Esophagus muscularis mucosa (tissue), 4 donors: ENCODE measurements at regions of chr4 and their contacts with region 1.

Region 1: DNA sequence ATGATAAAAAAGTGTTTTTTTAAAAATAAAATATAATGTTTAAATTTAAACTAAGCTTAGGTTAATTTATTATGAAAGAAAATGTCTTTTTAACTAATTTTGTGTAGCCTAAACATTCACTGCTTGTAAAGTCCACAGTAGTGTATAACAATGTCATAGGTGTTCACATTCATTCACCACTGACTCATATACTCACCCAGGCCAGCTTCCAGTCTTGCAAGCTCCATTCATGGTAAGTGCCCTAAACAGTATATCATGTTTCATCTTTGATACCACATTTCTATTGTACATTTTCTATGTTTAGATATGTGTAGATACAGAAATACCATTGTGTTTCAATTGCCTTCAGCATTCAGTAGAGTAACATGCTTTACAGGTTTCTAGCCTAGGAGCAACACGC is 530.3 kb downstream of the EPHA5 start:
- DNase-seq: no peak
- H3K4me3 ChIP-seq: no peak overlapping the region
- H3K27ac ChIP-seq: no peak overlapping the region
- H3K4me1 ChIP-seq: no peaks in the 10 kb centered on the region
- H3K27me3 ChIP-seq: no peaks in the 10 kb centered on the region
- CTCF ChIP-seq: no peak
- EP300 ChIP-seq: no peak
- POLR2A ChIP-seq: no peak

Region 2: DNA sequence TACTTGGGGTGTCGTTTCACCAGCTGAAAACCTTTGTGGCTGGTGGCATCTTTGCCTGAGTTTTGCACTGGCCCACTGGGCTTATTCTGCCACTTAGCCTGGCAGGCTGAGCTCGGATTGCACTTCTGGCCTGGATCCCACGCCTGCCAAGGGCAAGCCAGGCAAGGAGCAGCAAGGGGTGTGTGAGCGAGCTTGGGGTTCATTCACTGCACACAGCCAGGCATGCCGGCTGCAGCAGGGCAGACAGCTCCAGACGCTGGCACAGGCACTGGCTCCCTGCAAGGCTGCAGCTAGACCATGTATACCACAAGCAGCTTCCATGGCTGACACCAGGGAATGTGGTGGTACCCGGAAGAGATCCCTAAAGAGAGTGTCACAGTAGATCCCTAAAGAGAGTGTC is 54.0 kb after region 1 on chr4:
- intact Hi-C with region 1: loop called (anchors 10 kb)
- DNase-seq: no peak
- H3K4me3 ChIP-seq: no peak overlapping the region
- H3K27ac ChIP-seq: no peak overlapping the region
- H3K4me1 ChIP-seq: no peaks in the 10 kb centered on the region
- H3K27me3 ChIP-seq: no peaks in the 10 kb centered on the region
- CTCF ChIP-seq: no peak
- EP300 ChIP-seq: no peak
- POLR2A ChIP-seq: no peak

Region 3: DNA sequence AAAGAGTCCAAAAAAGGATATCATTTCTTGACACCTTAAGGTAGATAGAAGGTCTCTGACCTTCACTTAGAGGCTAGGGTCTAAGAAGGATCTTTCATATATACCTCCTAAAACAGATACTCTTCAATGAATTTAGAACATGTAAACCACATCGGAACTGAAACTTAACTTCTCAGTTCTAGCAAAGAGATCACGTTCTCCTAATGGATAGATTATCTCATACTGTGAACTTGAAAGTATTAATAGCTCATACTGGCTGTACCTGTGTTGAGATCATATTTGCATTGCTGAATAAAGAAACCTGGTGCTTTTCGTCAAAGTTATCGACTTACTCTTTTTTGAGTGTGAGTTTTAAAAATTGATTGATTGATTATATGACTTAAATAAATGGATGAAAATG is 176.5 kb after region 1 on chr4:
- intact Hi-C with region 1: no loop called
- DNase-seq: no peak
- H3K4me3 ChIP-seq: no peak overlapping the region
- H3K27ac ChIP-seq: no peak overlapping the region
- H3K4me1 ChIP-seq: no peaks in the 10 kb centered on the region
- H3K27me3 ChIP-seq: no peaks in the 10 kb centered on the region
- CTCF ChIP-seq: no peak
- EP300 ChIP-seq: no peak
- POLR2A ChIP-seq: no peak